HCT116 (cell line): ENCODE measurements at regions of chr2 and their contacts with region 1.

Region 1: GRCh38 chr2:223549215-223549614 is 52.9 kb downstream of the SCG2 start:
- DNase-seq: peak; percentile 99
- ATAC-seq: peak; percentile 87
- H3K4me3 ChIP-seq: peak overlapping the region in 1 of 2 experiments; percentile 21; a peak in 2 of 4 replicates
- H3K27ac ChIP-seq: peak overlapping the region; percentile 98
- H3K4me1 ChIP-seq: peaks cover 56 to 78% of the 10 kb centered on the region in 2 experiments
- H3K27me3 ChIP-seq: no peaks in the 10 kb centered on the region
- CTCF ChIP-seq: no peak
- POLR2A ChIP-seq: no peak
- RAD21 ChIP-seq: peak; percentile 61

Region 2: GRCh38 chr2:223560749-223561435 is 11.7 kb after region 1 on chr2:
- CTCF ChIA-PET with region 1: interaction called, 3 read pairs
- POLR2A ChIA-PET with region 1: interaction called, 12 read pairs
- RAD21 ChIA-PET with region 1: interaction called in 1 of 2 experiments, 3 read pairs
- intact Hi-C with region 1: no loop called
- DNase-seq: peak; percentile 88
- ATAC-seq: peak; percentile 56
- H3K4me3 ChIP-seq: peak overlapping the region in 1 of 2 experiments; percentile 24; a peak in 1 of 4 replicates
- H3K27ac ChIP-seq: peak overlapping the region; percentile 98
- H3K4me1 ChIP-seq: peaks cover 85 to 99% of the 10 kb centered on the region in 2 experiments
- H3K27me3 ChIP-seq: no peaks in the 10 kb centered on the region
- CTCF ChIP-seq: peak in 2 of 3 experiments; percentile 16 to 24; a peak in 3 of 6 replicates
- POLR2A ChIP-seq: no peak
- RAD21 ChIP-seq: peak; percentile 43